ENCODE measurements at regions of chrX and their contacts with region 1.

Region 1: DNA sequence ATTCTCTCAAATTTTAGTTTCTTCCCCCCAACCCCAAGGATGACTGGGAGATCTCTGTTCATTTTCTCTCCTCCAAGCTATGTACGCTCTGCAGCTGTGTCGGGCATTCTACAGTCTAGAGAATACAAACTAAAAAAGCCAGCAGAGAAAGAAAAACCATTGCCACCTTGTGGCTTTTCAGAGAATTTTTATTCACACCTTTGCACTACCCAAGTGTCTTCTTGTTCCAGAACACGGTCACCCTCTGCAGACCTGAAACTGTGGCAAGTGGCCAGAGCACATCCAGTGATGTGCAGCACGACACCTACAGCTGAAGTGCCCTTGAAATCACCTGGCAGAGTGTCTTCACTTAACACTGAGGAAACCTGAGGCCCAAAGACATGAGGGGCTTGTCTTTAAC is 68.6 kb downstream of the CHST7 start:
- DNase-seq: no peak
- H3K4me3 Mint-ChIP-seq: no peak overlapping the region
- H3K27ac Mint-ChIP-seq: no peak overlapping the region
- H3K4me1 Mint-ChIP-seq: peaks cover 17% of the 10 kb centered on the region
- H3K27me3 Mint-ChIP-seq: no peaks in the 10 kb centered on the region

Region 2: DNA sequence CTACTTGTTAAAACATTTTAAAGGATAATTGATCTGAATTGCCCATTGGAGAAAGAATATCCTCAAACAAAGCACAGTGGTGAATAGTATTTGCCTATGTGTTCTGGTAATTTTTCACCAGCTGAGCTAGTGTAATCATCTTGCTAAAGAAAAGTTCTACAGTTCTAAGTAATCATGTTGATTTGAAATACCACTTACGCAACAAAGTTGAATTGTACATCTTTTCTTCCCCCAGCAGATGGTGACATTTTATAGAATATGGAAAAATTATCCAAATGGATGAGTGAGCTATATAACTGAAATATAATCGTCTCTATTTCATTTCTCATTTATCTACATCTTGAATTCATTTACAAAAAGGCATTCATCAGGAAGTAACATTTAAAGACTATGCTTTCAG is 87.2 kb before region 1 on chrX:
- CTCF ChIA-PET with region 1: interaction called, 8 read pairs
- POLR2A ChIA-PET with region 1: no interaction called
- intact Hi-C with region 1: loop called (anchors 5 kb)
- DNase-seq: no peak
- H3K4me3 Mint-ChIP-seq: no peak overlapping the region
- H3K27ac Mint-ChIP-seq: no peak overlapping the region
- H3K4me1 Mint-ChIP-seq: no peaks in the 10 kb centered on the region
- H3K27me3 Mint-ChIP-seq: no peaks in the 10 kb centered on the region

Region 3: DNA sequence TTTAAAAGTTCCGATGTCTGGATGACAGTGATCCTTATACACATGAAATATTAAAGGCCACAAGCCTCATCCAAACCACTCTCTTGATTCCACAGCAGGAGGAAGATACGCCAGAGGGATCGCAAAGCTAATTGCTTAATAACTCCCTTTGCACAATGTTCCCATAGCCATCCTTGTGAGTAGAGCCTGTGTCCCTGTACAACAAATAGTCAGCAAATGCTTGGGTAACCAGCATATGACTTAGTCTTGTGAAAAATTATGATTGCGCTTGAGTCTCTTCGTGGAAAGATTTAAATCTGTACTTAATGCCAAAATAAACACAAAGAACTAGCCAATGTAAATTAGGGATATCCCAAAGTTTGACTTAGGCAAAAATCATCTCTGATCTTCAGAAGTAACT is 85.3 kb after region 1 on chrX:
- CTCF ChIA-PET with region 1: no interaction called
- POLR2A ChIA-PET with region 1: no interaction called
- intact Hi-C with region 1: no loop called
- DNase-seq: no peak
- H3K4me3 Mint-ChIP-seq: no peak overlapping the region
- H3K27ac Mint-ChIP-seq: no peak overlapping the region
- H3K4me1 Mint-ChIP-seq: peaks cover 17% of the 10 kb centered on the region
- H3K27me3 Mint-ChIP-seq: no peaks in the 10 kb centered on the region